ENCODE measurements at regions of chr1 and their contacts with region 1.

Region 1: DNA sequence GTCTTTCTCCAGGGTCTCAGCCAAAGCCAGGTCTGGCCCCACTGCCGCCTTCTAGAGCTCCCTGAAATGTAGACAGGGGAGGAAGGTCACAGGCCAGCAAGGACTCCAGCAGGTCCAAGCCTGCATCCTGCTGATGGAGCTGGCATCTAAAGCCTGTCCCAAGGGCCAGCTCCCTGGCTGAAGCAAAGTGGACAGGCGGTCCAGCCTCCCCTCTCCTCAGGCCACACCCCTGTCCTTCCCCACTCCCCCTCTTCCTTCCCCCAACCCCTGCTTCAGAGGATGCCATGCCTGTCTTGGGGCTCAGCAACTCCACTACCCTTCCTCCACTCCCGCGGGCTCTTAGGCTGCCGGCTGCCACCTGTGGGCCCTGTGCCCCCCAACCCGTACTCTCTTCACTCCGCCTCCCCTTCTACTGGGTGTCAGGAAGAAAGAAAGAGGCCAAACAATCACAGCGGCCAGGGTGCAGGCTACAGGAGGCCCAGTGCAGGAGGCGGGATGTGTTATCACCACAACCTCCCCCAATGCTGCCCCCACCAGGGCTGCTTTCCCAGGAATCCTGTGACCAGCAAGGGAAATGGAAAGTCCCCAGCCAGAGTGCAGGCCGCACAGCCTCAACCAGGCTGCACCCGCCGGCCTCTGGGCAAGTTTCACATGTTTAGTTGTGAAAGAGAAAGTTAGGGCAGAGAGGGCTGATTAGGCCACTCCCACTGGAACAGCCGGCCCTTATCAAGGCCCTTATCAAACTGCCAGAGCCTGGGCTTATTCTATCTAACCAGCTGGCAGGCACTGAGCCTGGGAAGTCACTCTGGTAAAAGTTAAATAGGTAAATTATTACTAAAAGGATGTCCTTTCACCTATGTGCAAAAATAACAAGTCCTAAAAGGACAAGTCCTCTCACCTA is 34.1 kb downstream of the ACOT7 start:
- DNase-seq: peak; percentile 88
- H3K4me3 ChIP-seq: no peak overlapping the region
- H3K27ac ChIP-seq: peak overlapping the region; percentile 60
- H3K4me1 ChIP-seq: peaks cover 20% of the 10 kb centered on the region
- H3K27me3 ChIP-seq: no peaks in the 10 kb centered on the region
- CTCF ChIP-seq: peak in 1 of 2 donors; percentile 21
- POLR2A ChIP-seq: no peak

Region 2: DNA sequence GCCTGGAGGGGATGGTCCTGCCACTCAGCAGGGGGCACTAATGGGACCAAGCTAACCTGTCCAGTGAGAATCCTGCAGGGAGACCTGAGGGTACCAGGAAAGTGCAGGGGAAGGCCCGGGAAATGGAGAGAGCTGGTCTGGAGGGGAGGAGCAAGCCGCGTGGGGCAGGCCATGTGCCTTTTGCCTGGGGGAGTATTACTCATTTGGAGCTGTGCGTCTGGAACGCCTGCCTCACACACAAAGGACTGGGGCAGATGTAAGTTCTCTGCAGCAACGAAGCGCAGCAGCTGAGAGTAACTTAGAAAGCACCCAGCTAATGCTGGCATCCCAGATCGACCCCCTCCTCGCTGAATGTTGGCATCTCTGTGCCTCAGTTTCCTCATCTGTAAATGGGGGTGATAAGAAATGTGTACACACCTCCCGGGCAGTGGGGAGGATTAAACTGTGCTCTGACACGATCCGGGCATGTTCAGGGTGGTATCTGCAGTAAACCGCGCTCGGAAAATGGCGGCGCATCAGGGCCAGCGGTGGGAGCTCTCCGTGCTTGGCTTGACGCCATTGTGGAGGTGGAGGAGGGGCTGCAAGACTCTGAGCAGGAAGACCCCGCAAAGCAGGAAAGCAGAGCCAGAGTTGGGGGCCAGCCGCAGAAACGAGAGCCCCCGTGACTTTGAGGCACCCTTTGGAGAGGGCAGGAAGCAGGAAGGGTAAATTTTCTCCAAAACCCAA is 579.7 kb before region 1 on chr1:
- CTCF ChIA-PET with region 1: no interaction called
- POLR2A ChIA-PET with region 1: no interaction called
- dilution Hi-C with region 1: no loop called
- intact Hi-C with region 1: no loop called
- DNase-seq: no peak
- H3K4me3 ChIP-seq: no peak overlapping the region
- H3K27ac ChIP-seq: no peak overlapping the region
- H3K4me1 ChIP-seq: no peaks in the 10 kb centered on the region
- H3K27me3 ChIP-seq: no peaks in the 10 kb centered on the region
- CTCF ChIP-seq: no peak
- POLR2A ChIP-seq: no peak

Region 3: GRCh38 chr1:6385488-6386191 is 26.2 kb after region 1 on chr1:
- CTCF ChIA-PET with region 1: interaction called, 237 read pairs
- POLR2A ChIA-PET with region 1: interaction called, 3 read pairs
- dilution Hi-C with region 1: no loop called
- intact Hi-C with region 1: no loop called
- DNase-seq: peak; percentile 48
- H3K4me3 ChIP-seq: no peak overlapping the region
- H3K27ac ChIP-seq: peak overlapping the region; percentile 62
- H3K4me1 ChIP-seq: peaks cover 12% of the 10 kb centered on the region
- H3K27me3 ChIP-seq: no peaks in the 10 kb centered on the region
- CTCF ChIP-seq: no peak
- POLR2A ChIP-seq: no peak

Region 4: GRCh38 chr1:6393400-6394187 is 34.1 kb after region 1 on chr1 and contains the start of gene ACOT7:
- CTCF ChIA-PET with region 1: interaction called, 237 read pairs
- POLR2A ChIA-PET with region 1: interaction called, 4 read pairs
- dilution Hi-C with region 1: no loop called
- intact Hi-C with region 1: loop called (anchors 1 kb)
- DNase-seq: peak; percentile 89
- H3K4me3 ChIP-seq: peak within 1 kb of the TSS; percentile 45 to 71 (median 63)
- H3K27ac ChIP-seq: peak within 1 kb of the TSS; percentile 57
- H3K4me1 ChIP-seq: peaks cover 16% of the 10 kb centered on the region
- H3K27me3 ChIP-seq: no peaks in the 10 kb centered on the region
- CTCF ChIP-seq: peak in 1 of 2 donors; percentile 24
- POLR2A ChIP-seq: peak; percentile 44
- total RNA-seq, gene ACOT7: 69.4 and 76.5 TPM in 2 replicates

Region 5: GRCh38 chr1:6401673-6402072 is 42.2 kb after region 1 on chr1:
- CTCF ChIA-PET with region 1: interaction called, 237 read pairs
- POLR2A ChIA-PET with region 1: no interaction called
- dilution Hi-C with region 1: no loop called
- intact Hi-C with region 1: loop called (anchors 1 kb)
- DNase-seq: no peak
- H3K4me3 ChIP-seq: no peak overlapping the region
- H3K27ac ChIP-seq: no peak overlapping the region
- H3K4me1 ChIP-seq: no peaks in the 10 kb centered on the region
- H3K27me3 ChIP-seq: no peaks in the 10 kb centered on the region
- CTCF ChIP-seq: no peak
- POLR2A ChIP-seq: no peak

Region 6: DNA sequence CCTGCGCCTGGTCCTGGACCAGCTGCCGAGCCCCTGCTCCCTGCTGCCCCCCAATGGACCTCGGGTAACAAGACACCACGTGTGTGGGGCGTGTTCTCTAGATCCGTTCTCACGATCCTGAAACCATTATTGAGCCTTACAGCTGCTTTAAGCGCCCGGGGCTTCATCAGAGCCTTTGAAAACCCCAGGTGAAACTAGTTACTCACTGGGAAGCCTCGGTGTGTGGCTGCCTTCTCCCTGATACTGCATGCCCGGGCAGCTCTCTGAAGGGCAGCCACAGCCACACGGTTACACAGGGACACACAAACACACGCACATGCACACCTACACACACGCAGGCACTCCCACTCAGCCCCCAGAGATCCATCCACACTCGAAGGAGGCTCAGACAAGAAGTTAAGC is 55.0 kb after region 1 on chr1:
- CTCF ChIA-PET with region 1: interaction called, 237 read pairs
- POLR2A ChIA-PET with region 1: no interaction called
- dilution Hi-C with region 1: no loop called
- intact Hi-C with region 1: no loop called
- DNase-seq: peak; percentile 52
- H3K4me3 ChIP-seq: no peak overlapping the region
- H3K27ac ChIP-seq: no peak overlapping the region
- H3K4me1 ChIP-seq: peaks cover 8% of the 10 kb centered on the region
- H3K27me3 ChIP-seq: peaks cover 4 to 8% of the 10 kb centered on the region in 2 experiments
- CTCF ChIP-seq: peak; percentile 53 to 77
- POLR2A ChIP-seq: no peak